HepG2 (cell line): ENCODE measurements at regions of chr19 and their contacts with region 1.

Region 1: DNA sequence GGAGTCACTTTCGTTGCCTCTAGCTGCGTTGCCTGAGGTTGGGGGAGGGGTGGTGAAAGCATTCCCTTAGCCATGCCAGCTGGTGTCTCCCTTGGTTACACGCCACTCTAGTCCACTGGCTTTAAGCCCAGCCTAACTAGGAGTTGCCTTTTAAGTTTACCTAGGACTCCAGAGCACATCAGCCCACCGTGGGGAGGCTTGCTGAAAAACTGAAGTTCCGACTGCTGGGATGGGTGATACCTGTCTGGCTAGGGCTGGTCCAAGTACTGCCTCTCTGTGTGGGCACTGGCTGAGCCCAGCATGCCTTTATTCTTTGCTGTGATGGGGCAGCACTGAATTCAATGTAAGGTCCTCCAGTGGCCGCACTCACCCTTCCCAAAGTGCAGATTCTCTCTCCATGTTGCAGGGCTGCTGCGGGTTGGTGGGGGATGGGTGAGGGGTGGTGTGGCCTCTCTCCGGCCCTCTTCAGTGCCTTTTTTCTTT is 11.8 kb upstream of the CEACAM1 start:
- DNase-seq: no peak
- ATAC-seq: peak; percentile 29
- H3K4me3 ChIP-seq: no peak overlapping the region
- H3K27ac ChIP-seq: no peak overlapping the region
- H3K4me1 ChIP-seq: peaks cover 62% of the 10 kb centered on the region
- H3K27me3 ChIP-seq: no peaks in the 10 kb centered on the region
- CTCF ChIP-seq: no peak
- EP300 ChIP-seq: no peak
- POLR2A ChIP-seq: no peak
- RAD21 ChIP-seq: no peak

Region 2: DNA sequence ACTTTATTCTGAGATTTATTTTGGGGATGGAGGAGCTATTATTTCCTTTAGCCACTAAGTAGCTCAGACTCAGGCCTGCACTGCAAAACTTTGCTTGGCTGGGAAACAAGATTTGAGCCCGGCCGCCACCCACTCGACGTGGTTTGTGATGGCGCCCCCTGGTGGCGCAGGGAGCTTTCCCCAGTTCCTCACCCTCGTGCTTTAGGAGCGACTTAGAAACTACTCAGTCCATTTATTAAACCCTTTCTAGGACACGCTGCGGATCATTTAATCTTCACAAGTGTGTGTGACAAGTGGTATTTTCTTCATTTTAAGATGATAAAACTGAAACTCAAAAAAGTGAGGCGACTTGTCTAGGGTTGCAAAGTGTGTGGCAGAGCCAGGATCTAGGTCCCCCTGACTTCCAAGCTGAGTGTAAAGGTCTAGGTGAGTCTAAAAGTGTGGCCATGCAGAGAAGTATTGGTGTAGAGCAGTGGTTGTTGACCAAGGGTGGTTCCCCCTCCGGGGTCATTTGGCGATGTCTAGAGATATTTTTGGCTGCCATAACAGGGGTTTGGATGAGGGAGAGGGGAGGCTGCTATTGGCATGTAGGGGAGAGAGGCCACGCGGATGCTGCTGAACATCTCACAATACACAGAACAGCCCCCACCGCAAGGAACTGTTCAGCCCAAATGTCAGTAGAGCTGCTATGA is 99.6 kb before region 1 on chr19:
- CTCF ChIA-PET with region 1: interaction called, 12 read pairs
- POLR2A ChIA-PET with region 1: no interaction called
- in situ Hi-C with region 1: no loop called
- intact Hi-C with region 1: no loop called
- DNase-seq: peak; percentile 57
- ATAC-seq: peak; percentile 42
- H3K4me3 ChIP-seq: peak overlapping the region; percentile 20 to 52 (median 32); a peak in 4 of 6 replicates
- H3K27ac ChIP-seq: peak overlapping the region; percentile 41
- H3K4me1 ChIP-seq: peaks cover 85% of the 10 kb centered on the region
- H3K27me3 ChIP-seq: no peaks in the 10 kb centered on the region
- CTCF ChIP-seq: peak; percentile 82
- EP300 ChIP-seq: no peak
- POLR2A ChIP-seq: no peak
- RAD21 ChIP-seq: 0 out of 2 replicates have a peak, but pooled peaks have one; percentile 11

Region 3: GRCh38 chr19:42450314-42450934 is 89.7 kb before region 1 on chr19:
- CTCF ChIA-PET with region 1: interaction called, 18 read pairs
- POLR2A ChIA-PET with region 1: interaction called, 4 read pairs
- in situ Hi-C with region 1: no loop called
- intact Hi-C with region 1: loop called (anchors 1 kb)
- DNase-seq: peak; percentile 98
- ATAC-seq: peak; percentile 99
- H3K4me3 ChIP-seq: peak overlapping the region in 1 of 3 experiments; percentile 25; a peak in 1 of 6 replicates
- H3K27ac ChIP-seq: peak overlapping the region; percentile 71
- H3K4me1 ChIP-seq: peaks cover 79% of the 10 kb centered on the region
- H3K27me3 ChIP-seq: no peaks in the 10 kb centered on the region
- CTCF ChIP-seq: peak; percentile 98
- EP300 ChIP-seq: peak; percentile 62 to 92; a peak in 3 of 4 replicates
- POLR2A ChIP-seq: peak in 1 of 2 experiments; percentile 38; a peak in 1 of 4 replicates
- RAD21 ChIP-seq: peak; percentile 97